ENCODE measurements at regions of chr1 and their contacts with region 1.

Region 1: DNA sequence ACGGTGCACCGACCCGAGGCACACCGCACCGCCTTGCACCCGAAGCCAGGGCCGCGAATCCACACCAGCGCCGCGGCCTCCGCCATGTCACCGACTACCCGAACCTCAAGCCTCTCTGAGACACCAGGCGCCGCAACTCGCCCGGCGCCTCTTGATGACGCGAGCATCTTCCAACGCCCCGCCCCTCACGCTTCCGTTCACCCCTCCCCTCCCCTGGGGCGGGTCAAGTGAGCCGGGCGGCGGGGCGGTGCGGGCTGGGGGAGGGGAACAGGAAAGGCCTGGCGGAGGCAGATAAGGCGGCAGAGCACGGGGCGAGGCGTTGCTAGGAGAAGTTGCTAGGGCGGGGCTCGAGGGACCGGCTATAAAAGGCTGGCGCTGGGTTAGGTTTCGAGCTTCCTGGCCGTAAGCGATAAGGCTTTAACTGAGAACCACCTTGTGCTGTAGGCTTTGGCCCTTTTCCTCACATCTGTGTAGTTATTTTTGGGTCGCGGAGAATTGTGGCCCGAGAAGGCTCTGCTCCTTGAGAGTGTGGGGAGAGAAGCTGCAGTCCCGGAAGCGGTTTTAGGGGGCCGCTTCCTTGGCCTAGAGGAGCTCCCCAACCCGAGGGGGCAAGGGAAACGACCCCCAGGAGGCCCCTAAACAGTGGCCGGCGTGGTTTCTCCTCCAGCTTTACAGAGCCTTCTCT is at the start of gene SDE2:
- DNase-seq: peak; percentile 99
- H3K4me3 Mint-ChIP-seq: peak within 1 kb of the TSS; percentile 100
- H3K27ac Mint-ChIP-seq: peak within 1 kb of the TSS; percentile 100
- H3K4me1 Mint-ChIP-seq: peaks cover 76% of the 10 kb centered on the region
- H3K27me3 Mint-ChIP-seq: no peaks in the 10 kb centered on the region
- total RNA-seq, gene SDE2: 28.2 and 28.4 TPM in 2 replicates

Region 2: GRCh38 chr1:225467193-225468020 is 532.0 kb before region 1 on chr1:
- intact Hi-C with region 1: loop called (anchors 5 kb)
- DNase-seq: peak; percentile 80
- H3K4me3 Mint-ChIP-seq: peak overlapping the region; percentile 92
- H3K27ac Mint-ChIP-seq: peak overlapping the region; percentile 95
- H3K4me1 Mint-ChIP-seq: peaks cover 45% of the 10 kb centered on the region
- H3K27me3 Mint-ChIP-seq: no peaks in the 10 kb centered on the region

Region 3: DNA sequence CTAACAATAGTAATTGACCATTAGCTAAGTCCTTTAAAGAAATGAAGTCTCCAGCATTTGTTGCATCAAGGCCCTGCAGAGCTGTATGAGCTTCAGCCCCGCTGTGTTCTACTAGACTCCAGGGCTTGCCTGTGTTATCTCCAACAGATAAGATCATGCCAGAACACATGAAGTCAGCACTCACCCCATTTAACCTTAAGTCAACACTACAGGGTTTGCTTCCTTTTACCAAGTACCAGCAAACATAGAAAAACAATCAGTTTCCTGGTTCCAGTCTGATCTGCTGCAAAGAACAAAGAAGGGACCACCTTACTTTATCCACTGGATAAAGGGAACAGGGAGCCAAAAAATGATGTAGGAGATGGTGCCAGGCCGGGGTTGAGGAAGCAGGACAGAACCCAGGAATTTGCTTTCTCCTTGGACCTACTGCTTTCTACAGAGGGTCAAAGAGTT is 305.2 kb before region 1 on chr1:
- intact Hi-C with region 1: no loop called
- DNase-seq: no peak
- H3K4me3 Mint-ChIP-seq: no peak overlapping the region
- H3K27ac Mint-ChIP-seq: no peak overlapping the region
- H3K4me1 Mint-ChIP-seq: no peaks in the 10 kb centered on the region
- H3K27me3 Mint-ChIP-seq: peaks cover 2% of the 10 kb centered on the region

Region 4: DNA sequence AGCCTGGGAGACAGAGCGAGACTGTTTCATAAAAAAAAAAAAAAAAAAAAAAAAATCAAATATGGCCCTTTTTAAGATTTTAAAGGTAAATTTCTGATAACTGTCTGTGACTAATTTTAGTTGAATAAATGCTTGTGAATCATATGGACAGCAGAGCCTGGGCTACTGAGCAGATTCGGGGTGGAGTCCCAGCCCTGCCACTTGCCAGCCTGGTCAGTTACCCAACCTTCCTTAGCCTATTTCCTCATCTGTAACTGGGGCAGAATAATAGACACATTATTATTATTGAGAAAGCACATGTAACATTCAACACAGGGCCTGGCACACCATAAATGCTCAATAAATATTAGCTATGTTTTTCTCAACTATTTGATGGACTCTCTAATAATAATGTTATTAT is 52.0 kb after region 1 on chr1:
- intact Hi-C with region 1: no loop called
- DNase-seq: no peak
- H3K4me3 Mint-ChIP-seq: no peak overlapping the region
- H3K27ac Mint-ChIP-seq: no peak overlapping the region
- H3K4me1 Mint-ChIP-seq: no peaks in the 10 kb centered on the region
- H3K27me3 Mint-ChIP-seq: peaks cover 16% of the 10 kb centered on the region

Region 5: DNA sequence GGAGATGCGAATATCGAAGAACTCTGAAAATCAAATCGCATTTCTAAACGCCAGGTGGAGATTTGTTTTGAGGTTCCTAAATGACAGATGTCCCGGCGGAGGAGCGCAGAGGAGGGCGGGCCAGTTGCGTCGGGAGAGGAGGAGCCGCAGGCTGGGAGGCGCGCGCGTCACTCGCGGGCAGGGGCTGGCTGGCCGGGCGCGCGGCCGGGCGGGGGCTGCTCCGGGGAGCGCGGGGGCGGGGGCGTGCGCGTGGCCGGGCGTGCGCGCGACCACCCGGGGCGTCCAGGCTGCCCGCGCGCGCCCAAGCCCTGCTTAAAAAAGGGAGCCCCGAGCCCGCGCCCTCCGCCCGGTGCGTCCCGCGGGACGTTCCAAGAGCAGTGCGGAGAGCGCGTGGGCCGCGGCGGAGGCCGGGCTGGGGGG is 110.5 kb after region 1 on chr1:
- intact Hi-C with region 1: loop called (anchors 1 kb)
- DNase-seq: peak; percentile 75
- H3K4me3 Mint-ChIP-seq: peak overlapping the region; percentile 90
- H3K27ac Mint-ChIP-seq: peak overlapping the region; percentile 88
- H3K4me1 Mint-ChIP-seq: peaks cover 25% of the 10 kb centered on the region
- H3K27me3 Mint-ChIP-seq: peaks cover 9% of the 10 kb centered on the region

Region 6: GRCh38 chr1:226186124-226187018 is 187.0 kb after region 1 on chr1 and contains the start of gene ACBD3:
- intact Hi-C with region 1: loop called (anchors 1 kb)
- DNase-seq: peak; percentile 84
- H3K4me3 Mint-ChIP-seq: peak within 1 kb of the TSS; percentile 96
- H3K27ac Mint-ChIP-seq: peak within 1 kb of the TSS; percentile 92
- H3K4me1 Mint-ChIP-seq: peaks cover 35% of the 10 kb centered on the region
- H3K27me3 Mint-ChIP-seq: no peaks in the 10 kb centered on the region
- total RNA-seq, gene ACBD3: 23.6 and 26.0 TPM in 2 replicates